Transverse colon (tissue), 4 donors: ENCODE measurements at regions of chr11 and their contacts with region 1.

Region 1: GRCh38 chr11:77472991-77473800 is 698 bp downstream of the PAK1 start:
- DNase-seq: peak; percentile 65
- H3K4me3 ChIP-seq: peak overlapping the region; percentile 55 to 93 (median 78)
- H3K27ac ChIP-seq: peak overlapping the region; percentile 89 to 94 (median 91)
- H3K4me1 ChIP-seq: peaks cover 5 to 55% (median 30%) of the 10 kb centered on the region in 4 donors
- H3K27me3 ChIP-seq: no peaks in the 10 kb centered on the region
- CTCF ChIP-seq: no peak
- EP300 ChIP-seq: no peak
- POLR2A ChIP-seq: peak; percentile 43

Region 2: DNA sequence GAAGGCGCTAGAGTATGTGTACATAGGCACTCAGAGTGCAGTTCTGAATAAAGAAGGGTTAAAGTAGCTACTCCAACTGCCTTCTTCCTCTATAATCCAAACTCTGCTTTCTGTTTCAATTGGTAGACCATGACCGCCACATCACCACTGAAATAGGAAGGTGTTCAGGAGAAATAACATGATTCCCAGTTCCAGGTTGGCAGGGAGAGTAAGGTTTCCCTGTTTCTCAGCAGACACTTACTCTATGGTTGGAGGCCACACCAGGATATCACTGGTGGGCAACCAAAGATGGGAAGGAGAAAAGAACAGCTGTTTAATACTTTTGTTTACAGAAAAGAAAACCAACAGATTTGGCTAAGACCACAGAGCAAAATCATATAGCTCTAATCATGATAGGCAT is 37.2 kb before region 1 on chr11:
- in situ Hi-C with region 1: no loop called
- intact Hi-C with region 1: loop called (anchors 1 kb)
- DNase-seq: no peak
- H3K4me3 ChIP-seq: no peak overlapping the region
- H3K27ac ChIP-seq: peak overlapping the region in 3 of 4 donors; percentile 36 to 39 (median 37)
- H3K4me1 ChIP-seq: peaks cover 5 to 27% (median 15%) of the 10 kb centered on the region in 4 donors
- H3K27me3 ChIP-seq: no peaks in the 10 kb centered on the region
- CTCF ChIP-seq: no peak
- EP300 ChIP-seq: no peak
- POLR2A ChIP-seq: no peak

Region 3: GRCh38 chr11:77512092-77512491 is 38.9 kb after region 1 on chr11:
- in situ Hi-C with region 1: no loop called
- intact Hi-C with region 1: no loop called
- DNase-seq: no peak
- H3K4me3 ChIP-seq: no peak overlapping the region
- H3K27ac ChIP-seq: no peak overlapping the region
- H3K4me1 ChIP-seq: peaks cover 0 to 14% (median 3%) of the 10 kb centered on the region in 4 donors
- H3K27me3 ChIP-seq: no peaks in the 10 kb centered on the region
- CTCF ChIP-seq: no peak
- EP300 ChIP-seq: no peak
- POLR2A ChIP-seq: no peak